HEK293 (cell line): ENCODE measurements at regions of chr1 and their contacts with region 1.

Region 1: GRCh38 chr1:225962440-225962975 is 21.5 kb upstream of the LEFTY2 start:
- H3K4me3 ChIP-seq: no peak overlapping the region
- H3K27ac ChIP-seq: no peak overlapping the region
- H3K4me1 ChIP-seq: no peaks in the 10 kb centered on the region
- CTCF ChIP-seq: peak; percentile 84

Region 2: DNA sequence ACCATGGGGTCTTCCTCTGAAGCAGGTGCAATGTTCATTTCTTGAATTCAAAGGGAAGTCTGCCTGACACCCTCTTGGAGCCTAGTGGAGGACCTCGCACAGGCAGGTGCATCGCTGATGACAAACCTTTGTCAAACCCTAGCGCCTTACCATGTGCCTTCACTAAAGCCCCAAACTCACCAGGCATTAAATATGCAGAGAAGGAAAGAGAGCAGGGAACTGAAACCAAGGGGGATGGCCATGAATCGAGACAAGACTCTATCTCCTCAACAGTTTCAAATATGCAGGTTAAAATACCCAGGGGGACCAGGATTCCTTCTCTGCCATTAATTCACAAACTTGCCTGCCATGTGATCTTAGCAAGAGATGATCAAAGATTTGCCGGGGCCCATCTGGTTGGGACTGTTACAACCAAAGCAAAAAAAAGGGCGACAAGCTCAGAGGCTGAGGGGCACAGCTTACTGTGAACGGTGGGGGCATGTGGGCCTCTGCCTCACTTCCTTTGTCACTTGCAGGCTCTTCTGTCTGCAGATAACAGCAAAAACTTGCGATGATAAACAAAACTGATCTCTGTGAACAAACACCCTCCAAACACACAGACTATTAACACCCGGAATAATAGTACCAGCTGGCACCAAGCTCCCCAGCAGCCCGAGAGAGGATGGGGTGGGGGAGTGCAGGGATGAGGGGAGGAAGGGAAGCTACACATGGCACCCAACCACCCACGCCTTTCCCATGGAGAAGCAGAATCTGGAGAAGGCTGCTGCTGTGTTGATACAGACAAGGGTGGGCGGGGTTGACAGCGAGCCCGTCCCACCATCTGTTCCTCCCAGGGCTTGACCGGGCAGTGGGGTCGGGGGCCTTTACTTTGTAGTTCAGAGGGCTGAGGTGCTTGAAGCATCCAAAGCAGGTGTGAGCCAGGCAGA is 114.2 kb before region 1 on chr1:
- CTCF ChIA-PET with region 1: no interaction called
- POLR2A ChIA-PET with region 1: no interaction called
- H3K4me3 ChIP-seq: no peak overlapping the region
- H3K27ac ChIP-seq: no peak overlapping the region
- H3K4me1 ChIP-seq: no peaks in the 10 kb centered on the region
- CTCF ChIP-seq: no peak

Region 3: DNA sequence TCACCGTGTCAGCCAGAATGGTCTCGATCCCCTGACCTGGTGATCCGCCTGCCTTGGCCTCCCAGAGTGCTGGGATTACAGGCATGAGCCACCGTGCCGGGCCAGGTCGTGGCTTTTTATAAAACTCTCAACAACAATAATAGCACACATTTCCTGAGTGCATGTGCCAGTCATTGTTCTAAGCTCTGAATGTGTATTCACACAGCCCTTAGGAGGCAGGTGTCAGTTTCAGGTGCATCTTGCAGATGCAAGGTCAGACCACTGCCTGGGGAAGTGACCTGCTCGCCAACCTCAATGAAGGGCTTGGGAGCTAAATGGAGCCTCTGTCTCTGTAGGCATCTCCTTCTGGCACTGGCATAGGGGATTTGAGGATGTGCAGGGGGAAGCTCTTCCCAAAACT is 19.9 kb before region 1 on chr1:
- CTCF ChIA-PET with region 1: interaction called, 18 read pairs
- POLR2A ChIA-PET with region 1: interaction called, 3 read pairs
- H3K4me3 ChIP-seq: no peak overlapping the region
- H3K27ac ChIP-seq: no peak overlapping the region
- H3K4me1 ChIP-seq: no peaks in the 10 kb centered on the region
- CTCF ChIP-seq: no peak

Region 4: GRCh38 chr1:225950905-225951497 is 11.5 kb before region 1 on chr1:
- CTCF ChIA-PET with region 1: interaction called, 32 read pairs
- POLR2A ChIA-PET with region 1: no interaction called
- H3K4me3 ChIP-seq: no peak overlapping the region
- H3K27ac ChIP-seq: no peak overlapping the region
- H3K4me1 ChIP-seq: no peaks in the 10 kb centered on the region
- CTCF ChIP-seq: no peak

Region 5: GRCh38 chr1:225977937-225978748 is 15.6 kb after region 1 on chr1:
- CTCF ChIA-PET with region 1: interaction called, 48 read pairs
- POLR2A ChIA-PET with region 1: no interaction called
- H3K4me3 ChIP-seq: no peak overlapping the region
- H3K27ac ChIP-seq: no peak overlapping the region
- H3K4me1 ChIP-seq: no peaks in the 10 kb centered on the region
- CTCF ChIP-seq: no peak

Region 6: DNA sequence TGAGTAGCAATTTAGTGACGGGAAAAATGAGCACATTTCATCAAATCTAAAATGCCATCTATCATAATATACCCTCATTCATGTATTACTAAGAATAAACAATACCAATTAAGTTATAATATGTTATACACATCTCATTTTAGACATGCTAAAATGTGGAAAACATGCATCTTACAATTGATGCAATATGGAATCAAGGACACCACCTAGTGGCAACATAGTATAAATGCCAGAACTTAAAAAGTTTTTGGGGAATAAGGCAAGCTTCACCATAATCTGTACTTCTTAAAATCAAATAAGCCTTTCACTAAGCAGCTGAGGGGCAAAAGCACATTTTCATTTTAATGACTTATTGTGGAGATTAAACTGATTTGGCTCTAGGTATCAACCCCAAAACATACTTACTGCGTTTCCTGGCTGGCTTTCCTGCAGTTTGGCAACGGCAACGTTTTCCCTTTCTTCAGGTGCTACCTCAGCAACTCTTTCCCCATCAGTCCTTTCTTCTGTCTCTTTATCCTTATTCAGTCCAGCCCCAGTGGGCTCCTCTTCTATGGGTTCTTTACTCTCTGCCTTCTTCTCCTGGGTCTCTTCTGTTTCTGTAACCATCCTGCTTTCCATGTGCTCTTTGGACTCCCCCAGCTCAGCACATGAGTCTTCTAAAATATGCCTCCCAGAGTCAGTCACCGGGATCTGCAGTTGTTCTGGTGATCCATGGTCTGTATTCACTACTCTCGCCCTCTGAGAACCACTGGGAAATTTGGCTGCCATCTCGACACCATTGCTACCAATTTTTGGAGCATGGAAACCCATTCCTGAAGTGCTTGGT is 25.2 kb after region 1 on chr1:
- CTCF ChIA-PET with region 1: interaction called, 10 read pairs
- POLR2A ChIA-PET with region 1: no interaction called
- H3K4me3 ChIP-seq: no peak overlapping the region
- H3K27ac ChIP-seq: no peak overlapping the region
- H3K4me1 ChIP-seq: no peaks in the 10 kb centered on the region
- CTCF ChIP-seq: peak; percentile 53; the same call in 1 of the 2 replicates

Region 7: GRCh38 chr1:226074046-226074445 is 111.5 kb after region 1 on chr1:
- CTCF ChIA-PET with region 1: no interaction called
- POLR2A ChIA-PET with region 1: no interaction called
- H3K4me3 ChIP-seq: no peak overlapping the region
- H3K27ac ChIP-seq: no peak overlapping the region
- H3K4me1 ChIP-seq: no peaks in the 10 kb centered on the region
- CTCF ChIP-seq: no peak